ENCODE measurements at regions of chr1 and their contacts with region 1.

Region 1: DNA sequence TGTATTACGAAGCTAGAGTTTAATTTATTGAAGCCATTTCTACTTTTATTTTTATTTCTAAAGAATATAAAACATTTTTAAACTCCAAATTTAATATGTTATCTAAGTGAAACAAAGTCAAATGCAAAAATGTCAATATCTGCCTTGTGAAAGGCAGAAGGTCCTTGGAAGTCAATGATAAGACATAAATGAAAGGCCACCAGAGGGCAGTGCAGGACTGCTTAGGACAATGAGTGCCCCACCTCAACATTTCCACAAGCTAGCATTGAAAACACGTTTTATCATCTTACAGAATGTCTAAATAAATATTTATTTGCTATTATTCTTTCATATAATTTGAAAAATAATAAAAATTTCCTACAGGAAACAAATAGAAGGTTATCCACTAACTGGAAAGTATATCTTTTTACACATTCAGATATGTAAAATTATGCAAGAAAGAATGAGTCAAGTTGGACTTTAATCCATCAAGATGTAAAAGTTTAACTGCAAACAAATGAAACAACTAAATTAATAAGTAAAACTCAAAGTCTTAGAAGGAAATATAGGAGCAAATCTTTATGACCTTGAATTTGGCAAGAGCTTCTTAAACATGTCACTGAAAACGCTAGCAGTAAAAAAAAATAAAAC is 140.1 kb upstream of the FMN2 start:
- DNase-seq: peak; percentile 65 to 68
- H3K4me3 ChIP-seq: no peak overlapping the region
- H3K4me3 Mint-ChIP-seq: no peak overlapping the region
- H3K27ac Mint-ChIP-seq: no peak overlapping the region
- H3K4me1 ChIP-seq: no peaks in the 10 kb centered on the region
- H3K4me1 Mint-ChIP-seq: no peaks in the 10 kb centered on the region
- H3K27me3 ChIP-seq: no peaks in the 10 kb centered on the region
- H3K27me3 Mint-ChIP-seq: peaks cover 2% of the 10 kb centered on the region
- CTCF ChIP-seq: peak; percentile 68 to 74

Region 2: GRCh38 chr1:239719642-239720258 is 231.9 kb before region 1 on chr1:
- CTCF ChIA-PET with region 1: no interaction called
- POLR2A ChIA-PET with region 1: no interaction called
- intact Hi-C with region 1: no loop called
- DNase-seq: no peak
- H3K4me3 ChIP-seq: no peak overlapping the region
- H3K4me3 Mint-ChIP-seq: no peak overlapping the region
- H3K27ac Mint-ChIP-seq: no peak overlapping the region
- H3K4me1 ChIP-seq: peaks cover 7% of the 10 kb centered on the region; the same call in 1 of the 2 replicates
- H3K4me1 Mint-ChIP-seq: no peaks in the 10 kb centered on the region
- H3K27me3 ChIP-seq: no peaks in the 10 kb centered on the region
- H3K27me3 Mint-ChIP-seq: no peaks in the 10 kb centered on the region
- CTCF ChIP-seq: no peak

Region 3: GRCh38 chr1:239914751-239915231 is 36.8 kb before region 1 on chr1:
- CTCF ChIA-PET with region 1: interaction called, 3 read pairs
- POLR2A ChIA-PET with region 1: no interaction called
- intact Hi-C with region 1: loop called (anchors 1 kb)
- DNase-seq: no peak
- H3K4me3 ChIP-seq: no peak overlapping the region
- H3K4me3 Mint-ChIP-seq: no peak overlapping the region
- H3K27ac Mint-ChIP-seq: no peak overlapping the region
- H3K4me1 ChIP-seq: no peaks in the 10 kb centered on the region
- H3K4me1 Mint-ChIP-seq: no peaks in the 10 kb centered on the region
- H3K27me3 ChIP-seq: no peaks in the 10 kb centered on the region
- H3K27me3 Mint-ChIP-seq: no peaks in the 10 kb centered on the region
- CTCF ChIP-seq: no peak

Region 4: GRCh38 chr1:239976130-239976968 is 24.7 kb after region 1 on chr1:
- CTCF ChIA-PET with region 1: interaction called, 5 read pairs
- POLR2A ChIA-PET with region 1: no interaction called
- intact Hi-C with region 1: loop called (anchors 1 kb)
- DNase-seq: peak in 1 of 2 experiments; percentile 39
- H3K4me3 ChIP-seq: no peak overlapping the region
- H3K4me3 Mint-ChIP-seq: no peak overlapping the region
- H3K27ac Mint-ChIP-seq: no peak overlapping the region
- H3K4me1 ChIP-seq: no peaks in the 10 kb centered on the region
- H3K4me1 Mint-ChIP-seq: no peaks in the 10 kb centered on the region
- H3K27me3 ChIP-seq: no peaks in the 10 kb centered on the region
- H3K27me3 Mint-ChIP-seq: peaks cover 8% of the 10 kb centered on the region
- CTCF ChIP-seq: peak; percentile 75 to 89

Region 5: DNA sequence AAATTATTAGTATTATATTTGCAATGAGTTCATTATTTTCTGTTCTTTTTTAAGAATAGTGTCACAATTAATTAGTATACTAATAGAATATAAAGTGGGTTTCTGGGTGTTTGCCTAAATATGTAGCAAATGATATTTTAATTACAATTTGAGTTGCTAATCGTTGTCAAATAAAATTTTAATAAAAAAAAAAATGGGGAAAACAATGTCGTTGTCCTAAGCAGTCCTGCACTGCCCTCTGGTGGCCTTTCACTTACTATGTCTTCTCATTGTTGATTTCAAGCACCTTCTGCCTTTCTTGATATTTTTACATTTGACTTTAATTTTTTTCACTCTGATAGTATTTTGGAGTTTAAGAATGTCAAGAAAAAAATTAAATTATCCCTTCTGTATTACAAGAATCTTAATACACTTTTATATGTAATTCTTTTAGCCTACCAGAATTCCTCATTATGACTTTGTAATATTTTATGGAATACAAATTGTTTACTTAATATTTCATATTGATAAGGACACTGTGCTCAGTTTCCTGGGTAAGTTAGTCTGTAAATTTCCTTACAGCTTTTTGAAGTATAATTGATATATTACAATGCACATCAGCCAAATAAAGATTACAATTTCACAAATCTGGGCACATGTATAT is 35.6 kb after region 1 on chr1:
- CTCF ChIA-PET with region 1: interaction called, 5 read pairs
- POLR2A ChIA-PET with region 1: no interaction called
- intact Hi-C with region 1: loop called (anchors 1 kb)
- DNase-seq: peak in 1 of 2 experiments; percentile 36
- H3K4me3 ChIP-seq: no peak overlapping the region
- H3K4me3 Mint-ChIP-seq: no peak overlapping the region
- H3K27ac Mint-ChIP-seq: no peak overlapping the region
- H3K4me1 ChIP-seq: no peaks in the 10 kb centered on the region
- H3K4me1 Mint-ChIP-seq: no peaks in the 10 kb centered on the region
- H3K27me3 ChIP-seq: no peaks in the 10 kb centered on the region
- H3K27me3 Mint-ChIP-seq: no peaks in the 10 kb centered on the region
- CTCF ChIP-seq: peak; percentile 50 to 60

Region 6: GRCh38 chr1:240004086-240004749 is 52.6 kb after region 1 on chr1:
- CTCF ChIA-PET with region 1: interaction called, 8 read pairs
- POLR2A ChIA-PET with region 1: no interaction called
- intact Hi-C with region 1: loop called (anchors 1 kb)
- DNase-seq: peak in 1 of 2 experiments; percentile 16
- H3K4me3 ChIP-seq: no peak overlapping the region
- H3K4me3 Mint-ChIP-seq: no peak overlapping the region
- H3K27ac Mint-ChIP-seq: no peak overlapping the region
- H3K4me1 ChIP-seq: no peaks in the 10 kb centered on the region
- H3K4me1 Mint-ChIP-seq: no peaks in the 10 kb centered on the region
- H3K27me3 ChIP-seq: no peaks in the 10 kb centered on the region
- H3K27me3 Mint-ChIP-seq: no peaks in the 10 kb centered on the region
- CTCF ChIP-seq: peak; percentile 56 to 75

Region 7: GRCh38 chr1:240149484-240150094 is 198.0 kb after region 1 on chr1:
- CTCF ChIA-PET with region 1: no interaction called
- POLR2A ChIA-PET with region 1: no interaction called
- intact Hi-C with region 1: loop called (anchors 1 kb)
- DNase-seq: peak in 1 of 2 experiments; percentile 45
- H3K4me3 ChIP-seq: no peak overlapping the region
- H3K4me3 Mint-ChIP-seq: no peak overlapping the region
- H3K27ac Mint-ChIP-seq: no peak overlapping the region
- H3K4me1 ChIP-seq: no peaks in the 10 kb centered on the region
- H3K4me1 Mint-ChIP-seq: no peaks in the 10 kb centered on the region
- H3K27me3 ChIP-seq: no peaks in the 10 kb centered on the region
- H3K27me3 Mint-ChIP-seq: peaks cover 7% of the 10 kb centered on the region
- CTCF ChIP-seq: peak; percentile 60 to 66

Measured in Caco-2 (cell line).